SK-N-SH (cell line): ENCODE measurements at regions of chr2 and their contacts with region 1.

Region 1: GRCh38 chr2:25342372-25343186 is 854 bp upstream of the DNMT3A start:
- DNase-seq: peak; percentile 99
- H3K4me3 ChIP-seq: peak overlapping the region; percentile 82 to 87
- H3K27ac ChIP-seq: peak overlapping the region in 1 of 2 experiments; percentile 93; a peak in 2 of 4 replicates
- H3K4me1 ChIP-seq: peaks cover 10 to 35% of the 10 kb centered on the region in 2 experiments; a peak in 2 of 4 replicates
- H3K27me3 ChIP-seq: no peaks in the 10 kb centered on the region
- CTCF ChIP-seq: peak; percentile 84
- EP300 ChIP-seq: peak in 1 of 2 experiments; percentile 38; a peak in 1 of 4 replicates
- RAD21 ChIP-seq: peak; percentile 83

Region 2: GRCh38 chr2:24806662-24807037 is 535.9 kb before region 1 on chr2:
- CTCF ChIA-PET with region 1: no interaction called
- POLR2A ChIA-PET with region 1: no interaction called
- DNase-seq: no peak
- H3K4me3 ChIP-seq: no peak overlapping the region
- H3K27ac ChIP-seq: peak overlapping the region in 1 of 2 experiments; percentile 23; a peak in 1 of 4 replicates
- H3K4me1 ChIP-seq: peaks cover 0 to 11% of the 10 kb centered on the region in 2 experiments; a peak in 2 of 4 replicates
- H3K27me3 ChIP-seq: no peaks in the 10 kb centered on the region
- CTCF ChIP-seq: no peak
- EP300 ChIP-seq: no peak
- RAD21 ChIP-seq: no peak

Region 3: GRCh38 chr2:25286025-25286400 is 56.6 kb before region 1 on chr2:
- CTCF ChIA-PET with region 1: interaction called, 11 read pairs
- POLR2A ChIA-PET with region 1: interaction called, 3 read pairs
- DNase-seq: peak; percentile 79
- H3K4me3 ChIP-seq: no peak overlapping the region
- H3K27ac ChIP-seq: peak overlapping the region in 1 of 2 experiments; percentile 50; a peak in 1 of 4 replicates
- H3K4me1 ChIP-seq: peaks cover 13 to 43% of the 10 kb centered on the region in 2 experiments; a peak in 2 of 4 replicates
- H3K27me3 ChIP-seq: no peaks in the 10 kb centered on the region
- CTCF ChIP-seq: no peak
- EP300 ChIP-seq: no peak
- RAD21 ChIP-seq: no peak

Region 4: GRCh38 chr2:25314514-25315315 is 27.9 kb before region 1 on chr2:
- CTCF ChIA-PET with region 1: interaction called, 117 read pairs
- POLR2A ChIA-PET with region 1: interaction called, 20 read pairs
- DNase-seq: peak; percentile 97
- H3K4me3 ChIP-seq: no peak overlapping the region
- H3K27ac ChIP-seq: peak overlapping the region in 1 of 2 experiments; percentile 100; a peak in 2 of 4 replicates
- H3K4me1 ChIP-seq: peaks cover 13 to 69% of the 10 kb centered on the region in 2 experiments; a peak in 3 of 4 replicates
- H3K27me3 ChIP-seq: no peaks in the 10 kb centered on the region
- CTCF ChIP-seq: no peak
- EP300 ChIP-seq: peak in 1 of 2 experiments; percentile 62; a peak in 1 of 4 replicates
- RAD21 ChIP-seq: peak; percentile 21; the same call in 1 of the 2 replicates

Region 5: GRCh38 chr2:25368660-25369059 is 26.1 kb after region 1 on chr2:
- CTCF ChIA-PET with region 1: interaction called, 20 read pairs
- POLR2A ChIA-PET with region 1: no interaction called
- DNase-seq: peak; percentile 86
- H3K4me3 ChIP-seq: no peak overlapping the region
- H3K27ac ChIP-seq: peak overlapping the region in 1 of 2 experiments; percentile 71; a peak in 2 of 4 replicates
- H3K4me1 ChIP-seq: peaks cover 0 to 56% of the 10 kb centered on the region in 2 experiments; a peak in 2 of 4 replicates
- H3K27me3 ChIP-seq: no peaks in the 10 kb centered on the region
- CTCF ChIP-seq: no peak
- EP300 ChIP-seq: no peak; a peak in 1 of 4 replicates
- RAD21 ChIP-seq: peak; percentile 21; the same call in 1 of the 2 replicates

Region 6: DNA sequence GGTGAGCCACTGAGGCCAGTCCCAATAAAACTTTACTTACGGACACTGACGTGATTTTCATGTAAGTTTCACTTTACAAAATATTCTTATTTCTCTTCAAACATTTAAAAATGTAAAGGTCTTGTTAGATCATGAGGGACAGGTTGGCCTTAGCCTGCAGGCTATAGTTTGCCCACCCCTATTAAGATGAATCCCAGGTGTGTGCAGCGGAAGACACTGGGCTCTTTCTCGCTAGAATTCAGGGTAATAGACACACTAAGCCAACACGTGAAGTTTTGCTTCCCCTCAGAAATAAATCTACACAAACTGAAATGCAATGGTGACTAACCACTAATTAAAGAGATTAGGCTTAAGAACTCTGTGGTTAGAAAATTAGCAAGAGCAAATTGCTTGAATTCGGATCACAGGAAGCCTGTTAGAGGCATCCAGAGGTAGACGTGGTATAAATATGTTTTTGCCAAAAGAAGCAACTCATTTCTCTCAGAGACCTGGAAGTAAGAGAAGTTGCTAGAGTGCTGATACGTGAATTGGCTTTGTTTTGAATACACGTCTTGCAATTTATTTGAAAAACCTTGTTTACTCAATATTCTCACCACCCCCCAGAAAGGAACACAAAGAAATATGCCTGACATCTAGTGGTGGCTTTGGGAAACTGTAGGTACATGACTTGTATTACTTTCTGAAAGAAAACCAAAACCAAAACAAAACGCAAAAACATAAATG is 179.2 kb after region 1 on chr2:
- CTCF ChIA-PET with region 1: interaction called, 10 read pairs
- POLR2A ChIA-PET with region 1: no interaction called
- DNase-seq: peak; percentile 66
- H3K4me3 ChIP-seq: no peak overlapping the region; a peak in 1 of 4 replicates
- H3K27ac ChIP-seq: peak overlapping the region; percentile 4 to 39; a peak in 2 of 4 replicates
- H3K4me1 ChIP-seq: peaks cover 4% of the 10 kb centered on the region in 2 experiments
- H3K27me3 ChIP-seq: no peaks in the 10 kb centered on the region
- CTCF ChIP-seq: peak; percentile 95
- EP300 ChIP-seq: no peak
- RAD21 ChIP-seq: peak; percentile 94

Region 7: GRCh38 chr2:25567406-25567805 is 224.8 kb after region 1 on chr2:
- CTCF ChIA-PET with region 1: interaction called, 15 read pairs
- POLR2A ChIA-PET with region 1: no interaction called
- DNase-seq: peak; percentile 55
- H3K4me3 ChIP-seq: no peak overlapping the region; a peak in 1 of 4 replicates
- H3K27ac ChIP-seq: no peak overlapping the region
- H3K4me1 ChIP-seq: peaks cover 0 to 7% of the 10 kb centered on the region in 2 experiments; a peak in 1 of 4 replicates
- H3K27me3 ChIP-seq: no peaks in the 10 kb centered on the region
- CTCF ChIP-seq: peak; percentile 78
- EP300 ChIP-seq: no peak
- RAD21 ChIP-seq: peak; percentile 81